ENCODE measurements at regions of chr2 and their contacts with region 1.

Region 1: GRCh38 chr2:217899231-217900009 is 103.4 kb downstream of the TNS1 start:
- DNase-seq: peak; percentile 86 to 90
- ATAC-seq: peak; percentile 42 to 61 (median 57)
- H3K4me3 ChIP-seq: no peak overlapping the region
- H3K27ac ChIP-seq: peak overlapping the region; percentile 89
- H3K4me1 ChIP-seq: peaks cover 73% of the 10 kb centered on the region
- H3K27me3 ChIP-seq: no peaks in the 10 kb centered on the region
- CTCF ChIP-seq: peak; percentile 60

Region 2: DNA sequence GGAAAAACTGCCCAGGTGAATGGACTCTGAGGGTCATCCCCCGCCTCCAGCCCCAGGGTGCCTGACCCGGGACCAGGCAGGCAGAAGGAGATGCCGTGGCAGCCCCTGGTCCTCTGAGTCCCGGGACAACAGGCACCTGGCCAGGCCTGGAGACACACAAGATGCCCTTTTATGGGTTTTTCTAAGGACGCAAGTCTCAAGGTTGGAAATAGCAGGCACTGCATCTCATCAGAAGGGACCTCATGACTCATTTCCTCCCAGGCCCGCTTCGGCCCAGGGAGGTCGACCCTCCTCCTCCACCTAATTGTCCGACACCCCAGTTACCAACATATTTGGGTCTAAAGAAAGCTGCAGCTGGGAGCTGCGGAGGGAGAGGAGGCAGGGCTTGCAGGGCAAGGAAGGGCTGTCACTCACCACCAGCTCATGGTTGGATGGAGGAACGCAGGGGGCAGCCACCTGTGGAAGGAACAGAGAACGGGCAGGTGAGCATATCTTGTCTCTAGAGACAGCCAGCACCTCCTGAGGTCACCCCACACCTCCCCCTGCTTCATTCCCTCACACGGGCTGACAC is 20.4 kb after region 1 on chr2:
- intact Hi-C with region 1: loop called in 1 of 2 experiments (anchors 2 kb)
- DNase-seq: peak; percentile 37 to 66
- ATAC-seq: no peak
- H3K4me3 ChIP-seq: no peak overlapping the region
- H3K27ac ChIP-seq: peak overlapping the region; percentile 97
- H3K4me1 ChIP-seq: peaks cover 90% of the 10 kb centered on the region
- H3K27me3 ChIP-seq: no peaks in the 10 kb centered on the region
- CTCF ChIP-seq: no peak

Region 3: GRCh38 chr2:218168635-218169462 is 269.4 kb after region 1 on chr2:
- intact Hi-C with region 1: no loop called
- DNase-seq: peak in 1 of 2 donors; percentile 22
- ATAC-seq: peak; percentile 51 to 82 (median 65)
- H3K4me3 ChIP-seq: no peak overlapping the region
- H3K27ac ChIP-seq: no peak overlapping the region
- H3K4me1 ChIP-seq: no peaks in the 10 kb centered on the region
- H3K27me3 ChIP-seq: peaks cover 0 to 6% (median 2%) of the 10 kb centered on the region in 3 donors
- CTCF ChIP-seq: peak; percentile 57